Right lobe of liver (tissue), 6 donors: ENCODE measurements at regions of chr10 and their contacts with region 1.

Region 1: DNA sequence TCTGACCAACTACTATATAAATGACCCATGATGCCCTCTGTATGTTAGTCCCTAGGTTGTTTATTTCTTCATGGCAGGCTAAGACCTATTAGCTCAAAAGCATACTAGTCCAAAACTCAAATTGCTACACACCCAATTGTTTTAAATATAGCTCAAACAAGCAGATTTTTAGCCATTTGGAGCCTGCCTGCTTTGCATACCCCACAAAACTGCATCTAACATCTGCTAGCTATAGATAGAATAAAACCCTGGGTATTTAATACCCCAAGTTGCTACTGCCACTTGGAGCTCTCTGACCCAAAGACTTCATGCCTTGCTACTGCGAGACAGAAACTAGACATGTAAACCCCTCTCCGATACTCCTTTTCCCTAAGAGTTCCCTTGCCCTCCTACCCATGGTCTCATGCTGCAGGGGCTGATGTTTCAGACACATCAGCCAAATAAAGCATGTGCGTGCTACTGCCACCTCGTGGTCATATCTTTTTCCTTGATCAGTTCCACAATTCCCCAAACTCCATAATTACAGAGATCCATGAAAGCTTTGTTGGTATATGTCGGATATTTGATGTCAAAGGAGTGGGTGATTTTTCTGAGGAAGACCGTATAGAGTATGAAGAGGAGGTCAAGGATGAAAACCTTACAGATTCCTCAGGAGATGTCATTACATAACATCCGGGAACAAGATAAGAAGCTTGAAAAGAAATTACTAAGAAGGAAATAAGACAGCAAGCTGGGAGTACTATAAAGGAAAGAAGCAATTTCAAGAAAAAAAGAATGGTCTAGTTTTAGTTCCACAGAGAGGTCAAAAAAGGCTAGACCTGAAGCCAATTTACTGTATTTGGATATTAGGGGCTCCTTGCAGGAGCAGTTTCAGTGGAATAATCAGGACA is 386.6 kb downstream of the SH2D4B start:
- DNase-seq: peak in 2 of 3 donors; percentile 35 to 61
- ATAC-seq: peak; percentile 85 to 93 (median 90)
- H3K4me3 ChIP-seq: no peak overlapping the region
- H3K27ac ChIP-seq: no peak overlapping the region
- H3K4me1 ChIP-seq: no peaks in the 10 kb centered on the region
- H3K27me3 ChIP-seq: no peaks in the 10 kb centered on the region
- CTCF ChIP-seq: peak; percentile 70 to 85 (median 81)
- POLR2A ChIP-seq: no peak

Region 2: DNA sequence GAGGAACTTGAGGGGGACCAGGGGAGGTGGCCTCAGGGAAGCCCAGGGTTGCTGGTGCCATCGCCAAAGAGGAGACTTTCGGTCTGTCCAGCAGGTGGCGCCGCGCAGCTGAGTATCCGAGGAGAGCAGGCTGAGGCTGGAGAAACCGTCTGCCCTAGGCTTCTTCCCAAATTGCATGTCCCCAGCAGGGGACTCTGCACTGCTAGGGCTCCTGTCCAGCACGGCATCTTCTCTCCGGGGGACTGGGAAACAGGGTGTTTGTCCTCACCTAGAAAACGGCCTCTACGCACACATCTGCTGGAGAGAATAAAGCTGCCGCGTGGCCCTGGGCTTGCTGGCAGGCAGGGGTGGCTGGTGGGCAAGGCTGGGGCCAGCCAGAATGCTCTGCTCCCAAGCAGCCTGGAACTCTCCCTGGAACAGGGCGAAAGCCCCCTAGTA is 224.7 kb before region 1 on chr10:
- intact Hi-C with region 1: loop called in 1 of 2 experiments (anchors 10 kb)
- DNase-seq: peak; percentile 87 to 88 (median 87)
- ATAC-seq: peak; percentile 92 to 98 (median 94)
- H3K4me3 ChIP-seq: no peak overlapping the region
- H3K27ac ChIP-seq: no peak overlapping the region
- H3K4me1 ChIP-seq: no peaks in the 10 kb centered on the region
- H3K27me3 ChIP-seq: no peaks in the 10 kb centered on the region
- CTCF ChIP-seq: peak; percentile 75 to 87 (median 84)
- POLR2A ChIP-seq: no peak